ENCODE measurements at regions of chr21 and their contacts with region 1.

Region 1: GRCh38 chr21:37366482-37367316 is at the start of gene DYRK1A:
- DNase-seq: peak; percentile 99
- H3K4me3 ChIP-seq: peak within 1 kb of the TSS; percentile 84
- H3K27ac ChIP-seq: peak within 1 kb of the TSS; percentile 93
- H3K27me3 ChIP-seq: no peaks in the 10 kb centered on the region
- CTCF ChIP-seq: no peak
- polyA plus RNA-seq, gene DYRK1A: 32.6 and 33.1 TPM in 2 replicates

Region 2: GRCh38 chr21:37267269-37268184 is 99.2 kb before region 1 on chr21 and contains the start of gene VPS26C:
- CTCF ChIA-PET with region 1: no interaction called
- POLR2A ChIA-PET with region 1: interaction called, 22 read pairs
- DNase-seq: peak; percentile 99
- H3K4me3 ChIP-seq: peak within 1 kb of the TSS; percentile 85
- H3K27ac ChIP-seq: peak within 1 kb of the TSS; percentile 100
- H3K27me3 ChIP-seq: no peaks in the 10 kb centered on the region
- CTCF ChIP-seq: no peak
- polyA plus RNA-seq, gene VPS26C: 42.7 and 45.6 TPM in 2 replicates